Naive thymus-derived CD8-positive, alpha-beta T cell (primary cell): ENCODE measurements at regions of chrX and their contacts with region 1.

Region 1: GRCh38 chrX:13064599-13065143 is 20.3 kb upstream of the FAM9C start:
- DNase-seq: no peak
- ATAC-seq: no peak
- H3K4me3 Mint-ChIP-seq: no peak overlapping the region
- H3K27ac Mint-ChIP-seq: peak overlapping the region in 4 of 10 donors; percentile 31 to 63 (median 44)
- H3K4me1 Mint-ChIP-seq: peaks cover 12 to 52% (median 30%) of the 10 kb centered on the region in 4 donors
- H3K27me3 Mint-ChIP-seq: no peaks in the 10 kb centered on the region

Region 2: GRCh38 chrX:13078739-13079444 is 14.2 kb after region 1 on chrX:
- POLR2A ChIA-PET with region 1: interaction called, 96 read pairs
- DNase-seq: peak in 1 of 10 donors; percentile 12
- ATAC-seq: no peak
- H3K4me3 Mint-ChIP-seq: peak overlapping the region; percentile 48 to 77 (median 66)
- H3K27ac Mint-ChIP-seq: peak overlapping the region; percentile 92 to 97 (median 94)
- H3K4me1 Mint-ChIP-seq: peaks cover 24 to 92% (median 86%) of the 10 kb centered on the region in 4 donors
- H3K27me3 Mint-ChIP-seq: no peaks in the 10 kb centered on the region

Region 3: GRCh38 chrX:13151828-13152510 is 87.3 kb after region 1 on chrX:
- POLR2A ChIA-PET with region 1: no interaction called
- DNase-seq: peak in 8 of 10 donors; percentile 44 to 78 (median 62)
- ATAC-seq: peak; percentile 88 to 95
- H3K4me3 Mint-ChIP-seq: peak overlapping the region in 8 of 10 donors; percentile 1 to 74 (median 60)
- H3K27ac Mint-ChIP-seq: peak overlapping the region; percentile 63 to 95 (median 87)
- H3K4me1 Mint-ChIP-seq: peaks cover 4 to 20% (median 13%) of the 10 kb centered on the region in 4 donors
- H3K27me3 Mint-ChIP-seq: no peaks in the 10 kb centered on the region